Right ventricle myocardium inferior (tissue), 1 donor: ENCODE measurements at regions of chr22 and their contacts with region 1.

Region 1: DNA sequence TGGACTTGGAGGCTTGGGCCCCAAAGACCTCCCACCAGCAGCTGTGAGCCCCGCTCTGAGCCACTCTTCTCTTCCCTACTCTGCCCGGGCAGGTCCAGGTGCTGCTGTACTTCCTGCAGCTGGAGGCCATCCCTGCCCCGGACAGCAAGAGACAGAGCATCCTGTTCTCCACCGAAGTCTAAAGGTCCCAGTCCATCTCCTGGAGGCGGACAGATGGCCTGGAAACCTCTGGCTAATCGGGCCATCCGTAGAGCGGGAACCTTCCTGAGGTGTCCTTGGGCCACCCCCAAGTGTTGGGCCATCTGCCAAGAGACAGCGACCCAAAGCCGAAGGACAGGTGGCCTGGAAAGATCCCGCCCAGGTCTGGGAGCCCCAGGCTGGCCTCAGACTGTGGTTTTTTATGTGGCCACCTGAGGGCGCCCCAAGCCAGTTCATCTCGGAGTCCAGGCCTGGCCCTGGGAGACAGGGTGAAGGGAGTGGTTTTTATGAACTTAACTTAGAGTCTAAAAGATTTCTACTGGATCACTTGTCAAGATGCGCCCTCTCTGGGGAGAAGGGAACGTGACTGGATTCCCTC is 135.1 kb downstream of the BCR start:
- DNase-seq: no peak
- ATAC-seq: no peak

Region 2: GRCh38 chr22:23219822-23220484 is 95.5 kb before region 1 on chr22:
- intact Hi-C with region 1: no loop called
- DNase-seq: no peak
- ATAC-seq: no peak

Region 3: DNA sequence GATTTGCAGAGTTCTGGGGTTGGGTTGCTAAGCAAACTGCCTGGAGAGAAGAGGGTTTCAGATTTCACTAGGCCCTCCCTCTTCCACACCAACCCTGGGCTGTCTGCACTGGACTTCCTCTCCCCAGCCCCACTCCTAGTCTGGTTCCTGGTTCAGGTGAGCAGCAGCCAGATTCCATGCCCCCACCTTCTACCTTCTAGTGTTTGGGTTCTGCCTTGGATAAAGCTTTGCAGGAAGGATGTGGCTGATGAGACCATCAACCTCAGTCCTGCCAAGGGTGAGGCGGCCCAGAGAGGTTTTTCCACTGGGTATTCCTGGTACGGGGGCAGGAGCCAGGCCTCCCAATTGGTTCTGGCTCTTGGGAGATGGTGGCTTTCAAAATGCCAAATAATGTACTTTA is 66.8 kb before region 1 on chr22:
- intact Hi-C with region 1: no loop called
- DNase-seq: no peak
- ATAC-seq: peak; percentile 26

Region 4: DNA sequence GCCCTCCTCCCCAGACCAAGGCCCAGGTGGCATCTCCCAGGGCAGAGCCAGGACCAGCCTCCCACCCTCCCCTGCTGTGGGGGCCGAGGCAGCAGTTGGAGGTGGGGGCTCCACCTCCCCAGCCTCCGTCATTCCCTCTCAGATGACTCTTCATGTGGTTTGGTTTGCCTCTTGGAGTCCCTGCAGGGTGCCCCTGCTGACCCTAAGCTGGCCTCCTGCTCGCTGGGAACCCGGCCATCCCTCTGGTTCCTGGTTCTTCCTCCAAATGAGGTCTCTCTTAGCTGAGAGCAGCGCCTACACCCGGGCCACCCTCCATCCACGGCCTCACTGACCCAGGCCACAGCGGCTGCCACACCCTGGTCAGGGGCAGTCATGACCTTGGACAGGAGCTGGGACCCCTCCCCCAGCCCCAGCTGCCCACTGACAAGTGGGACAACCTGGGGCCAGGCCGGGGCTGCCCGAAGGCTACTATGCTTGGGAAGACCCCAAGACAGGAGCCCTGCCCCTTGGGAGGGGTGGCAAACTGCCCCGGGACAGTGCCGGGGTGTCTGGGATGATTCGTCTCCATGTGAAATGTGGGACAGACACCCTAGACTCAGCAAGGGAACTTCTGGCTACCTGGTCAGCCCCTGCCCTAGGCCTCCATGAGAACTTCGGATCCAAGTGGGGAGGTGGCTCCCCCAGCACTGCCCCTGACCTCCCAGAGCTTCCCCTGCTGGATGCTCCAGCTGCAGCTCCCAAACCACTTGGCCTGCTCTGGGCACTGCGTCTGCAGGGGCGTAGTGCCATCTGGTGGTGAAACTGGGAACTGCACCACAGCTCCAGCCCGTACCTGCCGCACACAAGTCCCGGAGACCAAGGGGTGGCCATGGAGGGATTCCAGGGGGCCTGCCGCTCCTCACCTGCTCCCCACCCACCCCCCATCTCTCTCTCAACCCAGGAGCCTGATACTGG is 70.1 kb after region 1 on chr22:
- intact Hi-C with region 1: loop called (anchors 10 kb)
- DNase-seq: peak; percentile 87
- ATAC-seq: peak; percentile 76

Region 5: GRCh38 chr22:23539135-23539838 is 223.9 kb after region 1 on chr22:
- intact Hi-C with region 1: loop called (anchors 5 kb)
- DNase-seq: peak; percentile 89
- ATAC-seq: peak; percentile 98

Region 6: DNA sequence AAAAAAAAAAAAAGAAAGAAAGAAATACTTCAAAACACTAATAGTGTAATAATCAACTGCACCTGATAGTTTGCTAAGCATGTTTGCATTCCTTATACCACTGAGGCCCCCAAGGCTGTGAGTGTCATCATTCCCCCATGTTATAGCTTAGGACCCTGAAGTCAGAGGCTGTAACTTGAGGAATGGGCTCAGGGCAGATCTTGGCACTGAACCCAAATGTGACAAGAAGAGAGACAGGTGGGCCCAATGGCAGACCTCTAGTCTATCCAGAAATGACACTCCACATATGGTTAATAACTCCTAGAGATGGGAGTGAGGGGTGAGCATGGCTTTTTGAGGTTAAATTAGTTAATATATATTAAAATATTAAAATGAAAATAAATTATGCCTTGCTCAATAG is 422.3 kb after region 1 on chr22:
- intact Hi-C with region 1: no loop called
- DNase-seq: no peak
- ATAC-seq: no peak

Region 7: GRCh38 chr22:23857606-23858483 is 542.4 kb after region 1 on chr22 and contains the start of gene SLC2A11:
- intact Hi-C with region 1: loop called (anchors 10 kb)
- DNase-seq: peak; percentile 99
- ATAC-seq: peak; percentile 97
- total RNA-seq, gene SLC2A11: 20.3 TPM